ENCODE measurements at regions of chr16 and their contacts with region 1.

Region 1: DNA sequence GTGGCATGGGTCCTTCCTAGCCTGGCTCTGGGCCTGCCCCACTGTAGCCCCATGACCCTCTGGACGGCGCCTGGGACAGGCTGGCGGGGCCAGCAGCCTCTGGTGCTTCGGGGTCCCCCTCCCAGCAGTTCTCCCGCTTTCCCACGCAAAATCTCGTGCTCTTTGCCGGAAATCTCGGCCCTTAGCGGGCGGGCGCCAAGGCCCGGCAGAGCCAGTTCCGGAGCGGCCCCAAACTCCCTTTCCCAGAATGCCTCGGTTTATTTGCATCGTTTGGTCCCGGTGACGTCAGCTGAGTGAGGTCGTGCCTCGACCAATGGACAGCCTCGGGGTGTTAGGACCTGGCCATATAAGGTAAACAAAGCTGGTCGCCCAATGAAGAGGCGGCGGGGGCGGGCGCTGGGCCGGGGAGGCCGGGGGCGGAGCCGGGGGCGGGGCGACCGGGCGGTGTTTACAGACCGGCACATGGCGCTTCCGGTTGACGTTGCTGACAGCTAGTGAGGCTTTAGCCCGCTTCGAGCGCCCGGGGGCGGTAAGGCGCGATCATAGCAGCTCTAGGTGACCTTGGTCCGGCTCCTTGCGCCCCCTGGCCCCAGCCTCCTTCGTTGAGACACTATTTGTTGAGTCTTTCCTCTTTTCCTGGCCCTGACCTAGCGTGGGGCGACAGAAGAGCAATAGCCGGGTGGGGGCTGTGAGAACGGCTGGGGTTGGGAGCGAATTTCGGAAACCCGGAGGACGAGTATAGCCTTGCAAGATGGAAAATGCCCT is 1.5 kb upstream of the UBALD1 start:
- DNase-seq: peak; percentile 96 to 98
- H3K4me3 ChIP-seq: peak overlapping the region; percentile 35 to 62 (median 50)
- H3K27ac ChIP-seq: peak overlapping the region; percentile 98
- H3K4me1 ChIP-seq: peaks cover 0 to 48% (median 34%) of the 10 kb centered on the region in 4 experiments; a peak in 6 of 7 replicates
- H3K27me3 ChIP-seq: no peaks in the 10 kb centered on the region
- CTCF ChIP-seq: peak in 2 of 3 experiments; percentile 64 to 86; a peak in 3 of 4 replicates
- EP300 ChIP-seq: peak in 1 of 2 experiments; percentile 58; a peak in 1 of 3 replicates
- POLR2A ChIP-seq: peak in 1 of 2 experiments; percentile 61; a peak in 1 of 3 replicates
- RAD21 ChIP-seq: peak; percentile 24 to 49

Region 2: GRCh38 chr16:4538350-4539235 is 77.6 kb before region 1 on chr16 and contains the start of gene CDIP1:
- CTCF ChIA-PET with region 1: interaction called, 5 read pairs
- POLR2A ChIA-PET with region 1: interaction called, 11 read pairs
- DNase-seq: peak; percentile 85 to 97
- H3K4me3 ChIP-seq: peak within 1 kb of the TSS; percentile 69 to 87 (median 80)
- H3K27ac ChIP-seq: peak within 1 kb of the TSS; percentile 84
- H3K4me1 ChIP-seq: peaks cover 0 to 8% (median 5%) of the 10 kb centered on the region in 4 experiments; a peak in 5 of 7 replicates
- H3K27me3 ChIP-seq: peaks cover 1 to 14% (median 11%) of the 10 kb centered on the region in 4 experiments
- CTCF ChIP-seq: no peak
- EP300 ChIP-seq: 0 out of 3 replicates have a peak, but pooled peaks of 1 of the 2 experiments have one; percentile 8
- POLR2A ChIP-seq: peak in 1 of 2 experiments; percentile 86; a peak in 2 of 3 replicates
- RAD21 ChIP-seq: no peak
- total RNA-seq, gene CDIP1: 73.7 and 76.3 TPM in 2 replicates

Region 3: DNA sequence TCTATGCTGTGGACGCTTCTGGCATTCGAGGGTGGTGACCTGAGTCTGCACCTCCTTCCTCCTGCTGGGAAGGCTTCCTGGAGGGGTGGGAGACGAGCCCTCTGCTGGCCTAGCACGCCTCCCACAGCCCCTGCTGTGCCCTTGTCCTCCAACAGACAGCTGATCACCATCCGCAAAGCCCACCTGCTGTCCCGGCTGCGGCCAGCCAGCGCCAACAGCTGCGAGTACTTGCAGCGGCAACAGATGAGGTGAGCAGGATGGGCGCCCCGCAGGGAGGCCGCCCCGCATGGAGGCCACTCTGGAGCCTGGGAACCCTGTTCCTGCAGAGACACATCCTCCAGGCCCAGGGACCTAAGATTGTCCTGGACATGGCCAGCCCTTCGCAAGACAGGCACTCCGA is 23.2 kb before region 1 on chr16:
- CTCF ChIA-PET with region 1: interaction called, 7 read pairs
- POLR2A ChIA-PET with region 1: interaction called, 126 read pairs
- DNase-seq: peak; percentile 49 to 71
- H3K4me3 ChIP-seq: no peak overlapping the region
- H3K27ac ChIP-seq: no peak overlapping the region
- H3K4me1 ChIP-seq: peaks cover 0 to 18% (median 10%) of the 10 kb centered on the region in 4 experiments; a peak in 6 of 7 replicates
- H3K27me3 ChIP-seq: no peaks in the 10 kb centered on the region; a peak in 1 of 7 replicates
- CTCF ChIP-seq: no peak
- EP300 ChIP-seq: no peak; a peak in 1 of 3 replicates
- POLR2A ChIP-seq: no peak
- RAD21 ChIP-seq: no peak; a peak in 1 of 4 replicates

Region 4: DNA sequence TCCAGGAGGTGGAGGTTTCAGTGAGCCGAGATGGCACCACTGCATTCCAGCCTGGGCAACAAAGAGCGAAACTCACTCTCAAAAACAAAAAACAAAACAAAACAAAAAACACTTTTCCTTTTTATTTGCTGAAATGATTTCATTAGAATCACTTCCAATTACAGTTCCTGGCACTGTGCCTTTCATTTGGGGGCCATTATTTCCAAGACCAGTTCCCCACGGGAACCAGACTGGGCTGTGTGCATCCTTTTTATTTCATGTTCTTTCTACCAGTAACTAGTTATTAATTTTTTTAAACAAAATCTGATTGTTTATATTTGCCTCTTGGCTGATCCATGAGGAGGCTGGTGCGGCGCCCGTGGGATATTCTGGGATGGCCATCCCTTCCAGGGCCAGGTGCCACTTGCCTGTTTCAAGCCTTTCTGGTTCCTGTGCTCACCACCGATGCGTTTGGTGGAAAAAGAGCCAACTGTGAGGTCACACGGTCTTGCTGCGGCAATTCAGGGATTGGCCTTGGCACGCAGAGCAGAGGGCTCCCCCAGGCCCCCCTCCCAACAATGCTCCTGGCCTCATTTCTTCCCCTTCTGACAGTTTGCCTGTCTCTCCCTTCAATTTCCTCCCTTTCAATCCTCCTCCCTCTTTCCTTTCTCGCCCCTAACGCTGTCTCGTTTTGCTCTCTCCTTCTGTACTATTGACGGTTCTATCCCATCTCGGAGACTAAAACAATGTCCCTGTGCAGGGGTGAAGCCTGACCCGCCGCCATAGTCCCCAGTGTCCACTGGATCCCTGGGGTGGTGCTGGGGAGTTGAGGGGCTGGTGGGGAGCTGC is 15.0 kb before region 1 on chr16:
- CTCF ChIA-PET with region 1: interaction called, 5 read pairs
- POLR2A ChIA-PET with region 1: interaction called, 126 read pairs
- DNase-seq: no peak
- H3K4me3 ChIP-seq: no peak overlapping the region
- H3K27ac ChIP-seq: no peak overlapping the region
- H3K4me1 ChIP-seq: peaks cover 0 to 14% (median 6%) of the 10 kb centered on the region in 4 experiments; a peak in 6 of 7 replicates
- H3K27me3 ChIP-seq: no peaks in the 10 kb centered on the region; a peak in 1 of 7 replicates
- CTCF ChIP-seq: no peak
- EP300 ChIP-seq: no peak
- POLR2A ChIP-seq: no peak
- RAD21 ChIP-seq: no peak

Region 5: GRCh38 chr16:4693296-4693955 is 77.2 kb after region 1 on chr16 and contains the start of gene NUDT16L1:
- CTCF ChIA-PET with region 1: no interaction called
- POLR2A ChIA-PET with region 1: interaction called, 15 read pairs
- DNase-seq: peak; percentile 81 to 96
- H3K4me3 ChIP-seq: peak within 1 kb of the TSS; percentile 72 to 93 (median 76)
- H3K27ac ChIP-seq: peak within 1 kb of the TSS; percentile 50; the same call in 1 of the 2 replicates
- H3K4me1 ChIP-seq: peaks cover 0 to 7% (median 5%) of the 10 kb centered on the region in 4 experiments; a peak in 4 of 7 replicates
- H3K27me3 ChIP-seq: no peaks in the 10 kb centered on the region
- CTCF ChIP-seq: peak in 2 of 3 experiments; percentile 23 to 24; a peak in 2 of 4 replicates
- EP300 ChIP-seq: no peak
- POLR2A ChIP-seq: peak in 1 of 2 experiments; percentile 80; a peak in 2 of 3 replicates
- RAD21 ChIP-seq: no peak; a peak in 1 of 4 replicates
- total RNA-seq, gene NUDT16L1: 34.8 and 41.3 TPM in 2 replicates